BJ (cell line): ENCODE measurements at regions of chr3 and their contacts with region 1.

Region 1: DNA sequence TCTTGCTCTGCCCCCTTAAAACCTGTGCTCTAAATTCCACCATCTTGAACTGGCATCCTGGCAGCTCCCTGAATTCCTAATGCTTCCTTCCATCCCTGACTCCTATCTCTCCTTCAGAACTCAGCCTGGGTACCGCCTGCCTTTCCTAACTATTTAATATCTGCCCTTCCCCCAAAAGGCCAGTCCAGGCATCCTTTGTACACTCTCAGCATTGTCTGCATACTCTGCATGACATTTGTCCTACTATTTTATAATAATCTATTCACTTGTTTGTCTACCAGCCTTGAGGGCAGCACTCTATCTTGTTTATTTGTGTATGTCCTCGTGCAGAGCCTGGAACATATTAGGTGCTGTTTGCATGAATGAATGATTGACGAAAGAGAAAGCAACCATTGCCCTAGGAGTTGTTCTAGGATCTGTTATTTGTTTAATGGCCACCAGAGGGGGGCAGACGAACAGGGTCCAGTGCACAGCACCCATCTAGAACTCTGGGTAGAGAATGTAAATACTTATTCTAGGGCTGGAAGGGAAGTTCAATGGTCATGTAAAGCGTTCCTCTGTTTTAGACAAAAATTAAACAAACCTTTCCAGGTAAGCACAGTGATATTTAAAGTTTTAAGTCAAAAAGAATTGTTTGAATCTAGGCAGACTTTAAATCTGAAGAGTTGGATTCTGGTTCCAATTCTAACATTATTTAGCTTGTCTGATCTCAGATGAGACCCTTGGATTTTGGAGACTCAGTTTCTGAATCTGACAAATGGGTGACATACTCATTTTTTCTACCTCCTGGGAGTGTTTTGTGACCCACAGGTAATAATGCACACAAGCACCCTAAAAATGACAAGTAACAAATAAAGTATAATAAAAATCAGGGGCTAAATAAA is 125.8 kb upstream of the GALNT15 start:
- DNase-seq: no peak
- H3K4me3 ChIP-seq: no peak overlapping the region
- H3K27me3 ChIP-seq: no peaks in the 10 kb centered on the region
- CTCF ChIP-seq: peak; percentile 74

Region 2: GRCh38 chr3:15815696-15816095 is 233.0 kb before region 1 on chr3:
- CTCF ChIA-PET with region 1: interaction called, 10 read pairs
- POLR2A ChIA-PET with region 1: no interaction called
- DNase-seq: no peak
- H3K4me3 ChIP-seq: no peak overlapping the region
- H3K27me3 ChIP-seq: no peaks in the 10 kb centered on the region
- CTCF ChIP-seq: peak; percentile 30; the same call in 1 of the 2 replicates

Region 3: DNA sequence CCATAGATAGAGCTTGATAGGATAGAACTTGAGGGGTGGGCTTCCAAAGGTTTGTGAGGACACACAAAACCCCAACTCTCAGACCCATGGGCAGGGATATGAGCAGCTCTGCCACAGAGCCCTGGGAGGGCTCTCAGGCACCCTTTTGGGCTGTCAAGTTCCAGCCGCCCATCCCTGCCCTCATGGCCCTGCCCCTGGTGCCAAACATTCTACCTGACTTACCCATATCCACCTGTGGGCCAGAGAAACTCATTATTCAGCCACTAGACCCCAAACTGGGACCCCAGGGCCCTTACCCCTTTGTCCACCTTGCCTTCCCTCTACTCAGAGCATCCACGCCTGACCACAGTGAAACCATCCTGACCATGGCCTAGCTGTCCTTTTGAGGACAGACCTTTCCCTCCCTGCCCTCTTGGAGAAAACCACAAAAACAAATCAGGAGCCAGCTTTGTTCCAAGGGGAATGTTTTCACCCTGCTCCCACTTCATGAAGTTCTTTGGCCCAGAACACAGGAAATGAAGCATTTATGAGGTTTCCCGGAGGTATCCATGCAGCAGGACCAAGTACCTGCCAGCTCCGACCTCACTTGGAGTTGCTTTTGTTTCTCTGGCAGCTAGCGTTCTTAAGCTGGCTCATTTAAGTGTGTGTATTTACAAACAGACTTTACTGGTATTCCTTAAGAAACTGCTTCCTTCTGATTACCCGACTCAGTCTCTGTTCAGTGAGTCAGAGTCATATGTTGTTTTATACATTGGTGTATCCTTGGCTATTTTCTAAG is 91.6 kb after region 1 on chr3:
- CTCF ChIA-PET with region 1: interaction called, 11 read pairs
- POLR2A ChIA-PET with region 1: no interaction called
- DNase-seq: peak; percentile 47
- H3K4me3 ChIP-seq: no peak overlapping the region
- H3K27me3 ChIP-seq: no peaks in the 10 kb centered on the region
- CTCF ChIP-seq: no peak

Region 4: DNA sequence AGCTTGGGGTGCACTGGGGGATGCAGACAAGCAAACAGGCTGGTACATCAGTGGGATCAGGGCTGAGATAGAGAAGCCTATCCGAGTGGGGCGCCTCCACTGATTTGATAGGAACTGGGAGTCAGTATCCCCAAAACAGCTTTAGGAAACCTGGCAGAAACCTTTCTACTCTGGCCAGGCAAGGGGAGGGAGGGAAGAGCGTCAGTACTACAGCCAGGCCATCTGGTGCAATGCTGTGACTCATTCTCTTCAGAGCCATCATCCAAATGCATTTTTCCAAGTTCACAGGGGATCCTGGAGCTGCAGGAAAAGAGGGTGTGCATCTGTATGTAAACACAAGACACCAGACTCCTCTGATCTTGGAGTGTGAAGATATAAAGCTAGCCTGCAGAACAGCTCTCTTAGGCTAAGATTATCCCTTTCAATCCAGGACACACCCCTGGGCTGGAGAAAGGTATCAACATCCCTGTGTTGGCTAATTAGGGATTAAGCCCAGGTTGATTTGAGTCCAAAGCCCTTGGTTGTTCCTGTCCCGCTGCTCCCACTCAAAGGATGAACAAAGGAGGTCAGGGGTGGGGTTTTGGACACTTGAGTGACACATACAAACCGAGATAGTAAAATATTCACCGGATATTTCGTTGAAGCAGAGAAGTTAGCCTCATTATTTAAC is 135.1 kb after region 1 on chr3:
- CTCF ChIA-PET with region 1: interaction called, 171 read pairs
- POLR2A ChIA-PET with region 1: no interaction called
- DNase-seq: peak; percentile 68
- H3K4me3 ChIP-seq: no peak overlapping the region
- H3K27me3 ChIP-seq: no peaks in the 10 kb centered on the region
- CTCF ChIP-seq: no peak

Region 5: GRCh38 chr3:16247276-16248061 is 198.8 kb after region 1 on chr3:
- CTCF ChIA-PET with region 1: interaction called, 26 read pairs
- POLR2A ChIA-PET with region 1: no interaction called
- DNase-seq: peak; percentile 14
- H3K4me3 ChIP-seq: no peak overlapping the region
- H3K27me3 ChIP-seq: no peaks in the 10 kb centered on the region
- CTCF ChIP-seq: peak; percentile 90

Region 6: GRCh38 chr3:16456784-16457415 is 408.2 kb after region 1 on chr3:
- CTCF ChIA-PET with region 1: no interaction called
- POLR2A ChIA-PET with region 1: no interaction called
- DNase-seq: peak; percentile 52
- H3K4me3 ChIP-seq: no peak overlapping the region
- H3K27me3 ChIP-seq: no peaks in the 10 kb centered on the region
- CTCF ChIP-seq: no peak